Colonic mucosa (tissue), 4 donors: ENCODE measurements at regions of chr1 and their contacts with region 1.

Region 1: GRCh38 chr1:167599957-167600581 is 30.0 kb upstream of the RCSD1 start:
- DNase-seq: peak; percentile 27
- H3K4me3 ChIP-seq: no peak overlapping the region
- H3K27ac ChIP-seq: no peak overlapping the region
- H3K4me1 ChIP-seq: no peaks in the 10 kb centered on the region
- H3K27me3 ChIP-seq: no peaks in the 10 kb centered on the region
- CTCF ChIP-seq: peak; percentile 46

Region 2: DNA sequence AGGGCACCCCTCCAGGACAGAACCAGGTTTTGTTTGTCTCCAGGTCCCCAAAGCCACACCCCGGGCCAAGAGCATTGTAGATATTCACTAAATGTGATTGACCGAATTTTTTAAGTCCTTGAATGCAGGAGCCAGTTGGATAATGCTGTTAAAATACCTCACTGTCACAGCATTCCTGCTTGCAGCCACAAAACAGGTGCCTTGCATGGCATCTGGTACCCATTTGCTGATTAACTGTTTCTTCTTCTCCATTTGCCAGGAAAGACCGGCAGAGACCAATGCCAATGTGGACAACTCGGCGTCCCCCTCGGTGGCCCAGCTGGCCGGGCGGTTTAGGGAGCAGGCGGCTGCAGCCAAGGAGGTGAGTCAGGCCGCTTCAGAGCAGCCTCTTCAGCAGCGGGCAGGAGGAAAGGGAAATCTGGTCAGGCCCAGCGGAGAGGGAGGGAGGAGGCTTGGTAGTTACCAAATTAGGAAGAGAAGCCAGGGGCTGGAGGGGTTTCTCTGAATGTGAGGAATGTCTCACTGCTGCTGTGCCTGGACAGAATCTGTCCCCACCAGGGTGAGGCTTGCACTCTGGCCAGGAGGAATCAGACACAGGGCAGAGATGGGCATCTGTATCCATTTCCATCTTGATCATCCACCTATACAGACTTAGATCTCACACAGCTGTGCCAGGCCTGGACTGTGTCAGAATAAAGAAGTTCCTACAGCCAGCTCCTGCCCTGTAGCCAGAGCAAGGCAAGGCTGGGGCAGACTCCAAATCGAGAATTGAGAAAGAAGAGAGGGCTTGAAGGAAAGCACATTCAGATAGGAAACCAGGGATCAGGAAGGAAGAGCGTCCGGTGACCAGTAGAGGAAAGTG is 83.8 kb after region 1 on chr1:
- intact Hi-C with region 1: loop called (anchors 5 kb)
- DNase-seq: no peak
- H3K4me3 ChIP-seq: no peak overlapping the region
- H3K27ac ChIP-seq: peak overlapping the region; percentile 27
- H3K4me1 ChIP-seq: no peaks in the 10 kb centered on the region
- H3K27me3 ChIP-seq: no peaks in the 10 kb centered on the region
- CTCF ChIP-seq: no peak

Region 3: DNA sequence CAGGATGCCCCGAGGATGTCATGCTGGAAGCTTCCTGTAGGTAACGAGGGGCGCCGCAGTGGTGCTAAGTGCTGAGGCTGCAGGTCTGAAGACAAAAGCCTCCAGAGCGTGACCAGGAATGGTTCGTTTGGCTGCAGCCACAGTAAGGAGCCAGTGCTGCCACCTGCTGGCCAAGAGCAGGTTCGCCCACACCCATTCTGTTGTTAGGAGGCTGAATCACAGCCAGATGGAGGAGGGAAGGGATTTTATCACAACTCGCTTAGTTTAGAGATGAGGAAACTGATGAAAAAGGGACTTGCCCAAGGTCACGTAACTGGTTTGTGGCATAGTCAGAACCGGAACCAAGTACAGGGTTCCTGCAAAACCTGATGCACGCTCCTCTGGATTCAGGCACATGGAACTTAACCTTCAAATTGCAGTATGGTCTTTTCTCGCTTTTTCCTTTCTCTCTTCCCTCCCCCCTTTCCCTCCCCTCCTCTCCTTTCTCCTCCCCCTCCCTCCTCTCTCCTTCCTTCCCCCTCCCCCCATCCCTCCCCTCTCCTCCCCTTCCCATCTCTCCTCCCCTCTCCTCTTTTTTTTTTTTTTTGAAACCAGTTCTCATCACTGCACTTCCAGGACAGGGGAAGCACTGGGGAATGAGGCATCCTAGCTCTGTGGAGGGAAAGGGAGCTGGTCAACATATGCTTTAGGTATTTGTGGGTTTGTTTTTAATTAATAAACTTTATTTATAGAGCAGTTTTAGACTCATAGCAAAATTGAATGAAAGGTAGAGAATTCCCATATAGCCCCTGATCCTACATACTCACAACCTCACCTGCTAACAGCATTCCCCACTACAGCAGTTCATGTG is 203.5 kb after region 1 on chr1:
- intact Hi-C with region 1: loop called (anchors 10 kb)
- DNase-seq: peak; percentile 94
- H3K4me3 ChIP-seq: no peak overlapping the region
- H3K27ac ChIP-seq: no peak overlapping the region
- H3K4me1 ChIP-seq: no peaks in the 10 kb centered on the region
- H3K27me3 ChIP-seq: no peaks in the 10 kb centered on the region
- CTCF ChIP-seq: peak; percentile 97